MCF 10A (cell line): ENCODE measurements at regions of chr11 and their contacts with region 1.

Region 1: DNA sequence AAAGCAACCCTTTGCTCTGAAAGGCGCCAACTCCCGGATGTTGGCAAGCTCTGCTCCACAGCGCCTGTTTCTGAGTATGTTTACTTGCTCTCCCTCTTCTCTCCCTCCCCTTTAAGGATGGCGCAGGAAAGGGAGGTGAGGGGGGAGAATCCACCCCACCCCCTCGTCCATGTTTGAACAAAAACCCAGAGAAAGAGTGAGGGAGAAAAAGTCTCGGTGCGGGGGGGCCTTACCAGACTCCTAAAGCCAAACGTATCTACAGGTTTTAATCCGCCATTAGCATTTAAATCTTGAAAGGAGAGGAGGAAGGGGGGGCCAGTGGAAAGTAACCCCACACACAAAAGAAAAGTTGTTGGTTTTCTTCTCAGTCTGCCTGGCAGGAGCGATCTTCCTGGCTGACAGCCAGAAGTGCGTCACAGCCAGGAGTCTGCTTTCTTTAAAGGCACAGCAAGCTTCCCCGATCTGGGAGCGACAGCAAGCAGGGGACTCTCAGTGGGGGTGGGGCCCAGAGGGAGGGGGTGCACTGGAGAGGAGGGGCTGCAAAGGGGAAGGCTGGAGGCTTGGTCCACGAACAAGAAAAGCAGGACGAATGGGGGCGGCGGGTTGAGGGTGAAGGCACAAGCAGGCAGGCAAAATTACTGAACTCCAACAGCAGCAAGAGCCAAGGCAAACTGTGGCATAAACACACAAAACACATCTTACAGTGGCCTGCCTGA is 39.5 kb downstream of the NUMA1 start:
- DNase-seq: peak; percentile 91
- H3K4me3 Mint-ChIP-seq: no peak overlapping the region
- H3K27ac Mint-ChIP-seq: no peak overlapping the region
- H3K4me1 Mint-ChIP-seq: peaks cover 26% of the 10 kb centered on the region
- H3K27me3 Mint-ChIP-seq: no peaks in the 10 kb centered on the region
- CTCF ChIP-seq: no peak

Region 2: GRCh38 chr11:72004936-72005500 is 35.9 kb before region 1 on chr11:
- CTCF ChIA-PET with region 1: no interaction called
- POLR2A ChIA-PET with region 1: no interaction called
- intact Hi-C with region 1: no loop called
- DNase-seq: no peak
- H3K4me3 Mint-ChIP-seq: no peak overlapping the region
- H3K27ac Mint-ChIP-seq: no peak overlapping the region
- H3K4me1 Mint-ChIP-seq: no peaks in the 10 kb centered on the region
- H3K27me3 Mint-ChIP-seq: no peaks in the 10 kb centered on the region
- CTCF ChIP-seq: no peak

Region 3: DNA sequence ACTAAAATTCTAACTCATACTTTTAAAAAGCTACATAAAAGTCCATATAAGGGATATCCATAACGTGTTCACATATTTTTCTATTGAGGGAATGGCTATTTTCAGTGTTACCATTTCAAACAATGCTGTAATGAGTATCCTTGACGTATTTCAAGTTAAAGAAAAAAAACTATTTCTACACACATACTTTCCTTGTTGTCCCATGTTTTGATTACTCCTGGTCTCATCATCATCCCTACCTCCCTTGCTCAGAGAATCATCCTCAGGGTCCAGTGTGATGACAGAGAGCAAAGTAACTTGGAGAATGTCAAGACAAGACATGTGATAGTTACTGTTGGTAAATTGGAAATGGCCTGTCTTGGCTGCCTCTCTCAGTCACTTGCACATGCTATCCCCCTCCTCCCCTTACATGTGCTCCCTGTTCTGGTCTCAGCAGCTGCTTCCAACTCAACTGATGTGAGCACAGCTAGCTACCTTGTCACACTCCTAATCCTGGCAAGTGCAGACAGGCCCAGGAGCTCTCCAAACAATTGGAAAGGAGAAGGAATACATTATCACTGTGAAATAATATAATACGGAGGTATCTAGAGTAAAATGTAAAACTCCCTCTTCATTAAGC is 17.6 kb after region 1 on chr11:
- CTCF ChIA-PET with region 1: interaction called, 6 read pairs
- POLR2A ChIA-PET with region 1: interaction called, 20 read pairs
- intact Hi-C with region 1: no loop called
- DNase-seq: no peak
- H3K4me3 Mint-ChIP-seq: no peak overlapping the region
- H3K27ac Mint-ChIP-seq: peak overlapping the region; percentile 39
- H3K4me1 Mint-ChIP-seq: peaks cover 9% of the 10 kb centered on the region
- H3K27me3 Mint-ChIP-seq: no peaks in the 10 kb centered on the region
- CTCF ChIP-seq: no peak

Region 4: DNA sequence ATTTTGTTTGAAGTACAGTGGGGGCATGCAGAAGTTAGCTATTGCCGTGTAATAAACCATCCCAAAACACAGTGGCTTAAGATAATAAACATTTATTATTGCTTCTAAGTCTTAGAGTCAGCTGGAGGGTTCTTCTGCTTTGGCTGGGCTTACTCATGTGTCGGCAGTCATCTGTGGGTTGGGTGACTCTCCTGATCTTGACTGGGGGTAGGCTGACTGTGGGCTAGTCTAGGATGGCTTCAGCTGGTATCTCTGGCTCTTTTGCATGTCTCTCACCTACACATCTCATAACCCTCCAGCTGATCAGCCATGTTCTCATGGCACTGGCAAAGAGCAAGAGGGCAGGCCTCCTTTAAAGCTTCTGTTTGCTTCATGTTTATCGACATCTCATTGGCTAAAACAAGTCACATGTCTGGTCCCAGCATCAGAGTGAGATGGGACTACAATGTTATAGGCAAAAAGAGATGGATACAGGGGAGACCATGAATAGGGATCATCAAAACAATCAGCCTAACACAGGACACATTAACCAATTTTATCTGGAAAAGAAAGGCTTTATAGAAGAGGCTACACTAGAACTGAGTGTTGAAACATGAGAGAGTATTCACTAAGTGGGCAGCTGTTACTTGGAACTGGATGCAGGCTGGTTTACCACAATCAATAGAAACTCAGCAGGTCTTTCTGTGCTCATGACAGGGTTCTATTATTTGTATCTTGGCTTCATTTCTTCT is 44.9 kb after region 1 on chr11:
- CTCF ChIA-PET with region 1: interaction called, 21 read pairs
- POLR2A ChIA-PET with region 1: interaction called, 38 read pairs
- intact Hi-C with region 1: loop called (anchors 1 kb)
- DNase-seq: no peak
- H3K4me3 Mint-ChIP-seq: no peak overlapping the region
- H3K27ac Mint-ChIP-seq: no peak overlapping the region
- H3K4me1 Mint-ChIP-seq: peaks cover 23% of the 10 kb centered on the region
- H3K27me3 Mint-ChIP-seq: no peaks in the 10 kb centered on the region
- CTCF ChIP-seq: no peak

Region 5: DNA sequence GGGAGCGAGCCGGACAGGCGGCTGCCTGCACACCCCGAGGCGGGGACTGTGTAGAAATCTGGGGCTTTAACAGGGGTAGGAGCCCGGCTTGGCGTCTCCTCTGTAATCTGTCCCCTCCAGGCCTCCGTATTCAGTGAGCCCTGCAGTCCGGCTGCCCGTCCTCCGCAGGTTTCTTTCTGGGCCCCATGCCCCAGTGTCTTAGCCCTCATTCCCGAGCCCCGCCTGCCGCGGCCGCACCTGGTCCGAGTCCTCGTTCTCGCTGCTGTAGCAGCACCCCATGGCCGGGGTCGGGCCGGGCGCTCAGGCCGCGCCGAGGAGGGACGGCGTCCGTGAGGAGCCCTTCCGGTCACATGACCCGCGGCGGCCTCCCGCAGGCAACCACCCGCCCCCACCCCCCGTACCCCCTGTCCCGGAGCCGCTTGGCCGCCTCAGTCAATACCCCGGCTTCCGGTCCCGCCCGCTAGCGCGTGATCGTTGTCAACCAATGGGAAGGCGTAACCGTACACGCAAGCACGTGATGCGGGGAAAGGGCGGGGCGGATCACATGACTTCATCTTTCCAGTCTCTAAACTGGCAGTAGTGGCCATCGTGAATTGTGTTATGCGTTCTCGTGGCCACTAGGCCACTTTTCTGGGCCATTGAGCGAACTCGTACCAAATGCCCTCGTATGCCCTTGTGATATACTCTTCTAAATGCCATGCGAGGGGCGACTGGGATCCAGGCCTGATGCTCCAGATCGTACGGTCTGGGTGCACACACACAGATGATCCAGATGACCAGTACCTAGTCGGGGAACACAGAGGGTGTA is 62.3 kb after region 1 on chr11 and contains the start of gene LAMTOR1:
- CTCF ChIA-PET with region 1: interaction called, 3 read pairs
- POLR2A ChIA-PET with region 1: interaction called, 10 read pairs
- intact Hi-C with region 1: no loop called
- DNase-seq: peak; percentile 98
- H3K4me3 Mint-ChIP-seq: peak within 1 kb of the TSS; percentile 100
- H3K27ac Mint-ChIP-seq: peak within 1 kb of the TSS; percentile 100
- H3K4me1 Mint-ChIP-seq: peaks cover 43% of the 10 kb centered on the region
- H3K27me3 Mint-ChIP-seq: no peaks in the 10 kb centered on the region
- CTCF ChIP-seq: peak; percentile 29
- total RNA-seq, gene LAMTOR1: 76.9 and 82.4 TPM in 2 replicates

Region 6: DNA sequence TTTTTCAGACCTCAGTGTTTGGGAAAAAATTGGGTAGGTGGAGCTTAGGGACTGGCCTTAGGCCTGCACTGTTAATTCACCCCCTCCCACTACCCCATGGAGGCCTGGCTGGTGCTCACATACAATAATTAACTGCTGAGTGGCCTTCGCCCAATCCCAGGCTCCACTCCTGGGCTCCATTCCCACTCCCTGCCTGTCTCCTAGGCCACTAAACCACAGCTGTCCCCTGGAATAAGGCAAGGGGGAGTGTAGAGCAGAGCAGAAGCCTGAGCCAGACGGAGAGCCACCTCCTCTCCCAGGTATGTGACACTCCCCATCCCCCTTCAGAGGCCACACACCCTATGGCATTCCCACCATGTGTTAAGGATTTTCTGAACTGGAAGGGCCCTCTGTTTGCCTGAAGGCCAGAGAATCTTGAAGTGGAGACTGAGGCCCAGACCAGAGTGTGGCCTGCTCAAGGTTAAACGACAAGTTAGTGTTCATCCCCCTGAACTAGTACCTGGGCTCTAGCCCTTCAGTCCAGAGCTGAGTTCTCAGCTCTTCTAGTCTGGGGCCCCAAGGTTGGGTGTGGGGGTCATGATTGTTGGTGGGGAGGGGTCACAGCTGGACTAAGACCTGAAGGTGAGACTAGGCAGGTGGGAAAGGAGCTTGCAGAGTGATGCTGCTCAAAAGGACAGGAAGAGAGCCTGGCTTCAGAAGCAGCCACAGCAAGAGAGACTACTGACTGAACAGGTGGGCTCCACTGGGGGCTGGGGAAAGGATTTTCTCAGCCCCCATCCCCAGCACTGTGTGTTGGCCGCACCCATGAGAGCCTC is 148.8 kb after region 1 on chr11:
- CTCF ChIA-PET with region 1: interaction called, 13 read pairs
- POLR2A ChIA-PET with region 1: no interaction called
- intact Hi-C with region 1: no loop called
- DNase-seq: no peak
- H3K4me3 Mint-ChIP-seq: no peak overlapping the region
- H3K27ac Mint-ChIP-seq: no peak overlapping the region
- H3K4me1 Mint-ChIP-seq: peaks cover 7% of the 10 kb centered on the region
- H3K27me3 Mint-ChIP-seq: no peaks in the 10 kb centered on the region
- CTCF ChIP-seq: no peak